Activated CD8-positive, alpha-beta T cell treated with anti-CD3 and anti-CD28 coated beads for 36 hours (primary cell): ENCODE measurements at regions of chr18 and their contacts with region 1.

Region 1: GRCh38 chr18:267688-268552 is at the start of gene THOC1:
- DNase-seq: peak; percentile 98
- ATAC-seq: peak; percentile 90
- H3K4me3 Mint-ChIP-seq: peak within 1 kb of the TSS; percentile 99
- H3K27ac Mint-ChIP-seq: peak within 1 kb of the TSS; percentile 99
- H3K4me1 Mint-ChIP-seq: peaks cover 32% of the 10 kb centered on the region
- H3K27me3 Mint-ChIP-seq: no peaks in the 10 kb centered on the region
- CTCF ChIP-seq: no peak
- total RNA-seq, gene THOC1: 66.0 to 69.5 TPM

Region 2: GRCh38 chr18:158128-159036 is 109.5 kb before region 1 on chr18 and contains the start of gene USP14:
- CTCF ChIA-PET with region 1: no interaction called
- POLR2A ChIA-PET with region 1: interaction called, 10 read pairs
- intact Hi-C with region 1: no loop called
- DNase-seq: peak; percentile 98
- ATAC-seq: peak; percentile 98
- H3K4me3 Mint-ChIP-seq: peak within 1 kb of the TSS; percentile 92
- H3K27ac Mint-ChIP-seq: peak within 1 kb of the TSS; percentile 95
- H3K4me1 Mint-ChIP-seq: peaks cover 24% of the 10 kb centered on the region
- H3K27me3 Mint-ChIP-seq: no peaks in the 10 kb centered on the region
- CTCF ChIP-seq: no peak
- total RNA-seq, gene USP14: 94.6 to 96.2 TPM

Region 3: GRCh38 chr18:255171-255570 is 12.7 kb before region 1 on chr18:
- CTCF ChIA-PET with region 1: no interaction called
- POLR2A ChIA-PET with region 1: interaction called, 14 read pairs
- intact Hi-C with region 1: no loop called
- DNase-seq: no peak
- ATAC-seq: no peak
- H3K4me3 Mint-ChIP-seq: no peak overlapping the region
- H3K27ac Mint-ChIP-seq: no peak overlapping the region
- H3K4me1 Mint-ChIP-seq: no peaks in the 10 kb centered on the region
- H3K27me3 Mint-ChIP-seq: no peaks in the 10 kb centered on the region
- CTCF ChIP-seq: no peak

Region 4: GRCh38 chr18:616380-616995 is 348.6 kb after region 1 on chr18:
- CTCF ChIA-PET with region 1: interaction called, 4 read pairs
- POLR2A ChIA-PET with region 1: no interaction called
- intact Hi-C with region 1: loop called (anchors 10 kb)
- DNase-seq: no peak
- ATAC-seq: peak; percentile 55
- H3K4me3 Mint-ChIP-seq: no peak overlapping the region
- H3K27ac Mint-ChIP-seq: no peak overlapping the region
- H3K4me1 Mint-ChIP-seq: no peaks in the 10 kb centered on the region
- H3K27me3 Mint-ChIP-seq: no peaks in the 10 kb centered on the region
- CTCF ChIP-seq: peak; percentile 58

Region 5: GRCh38 chr18:824179-824578 is 556.3 kb after region 1 on chr18:
- CTCF ChIA-PET with region 1: no interaction called
- POLR2A ChIA-PET with region 1: no interaction called
- intact Hi-C with region 1: loop called (anchors 10 kb)
- DNase-seq: no peak
- ATAC-seq: no peak
- H3K4me3 Mint-ChIP-seq: no peak overlapping the region
- H3K27ac Mint-ChIP-seq: no peak overlapping the region
- H3K4me1 Mint-ChIP-seq: peaks cover 14% of the 10 kb centered on the region
- H3K27me3 Mint-ChIP-seq: no peaks in the 10 kb centered on the region
- CTCF ChIP-seq: no peak